Transverse colon (tissue), 4 donors: ENCODE measurements at regions of chr5 and their contacts with region 1.

Region 1: GRCh38 chr5:179166886-179167841 is 107.0 kb downstream of the ZNF354C start:
- DNase-seq: peak; percentile 34
- H3K4me3 ChIP-seq: peak overlapping the region in 2 of 4 donors; percentile 9 to 25
- H3K27ac ChIP-seq: no peak overlapping the region
- H3K4me1 ChIP-seq: peaks cover 0 to 10% (median 4%) of the 10 kb centered on the region in 4 donors
- H3K27me3 ChIP-seq: no peaks in the 10 kb centered on the region
- CTCF ChIP-seq: peak; percentile 47 to 93 (median 88)
- EP300 ChIP-seq: no peak
- POLR2A ChIP-seq: no peak

Region 2: DNA sequence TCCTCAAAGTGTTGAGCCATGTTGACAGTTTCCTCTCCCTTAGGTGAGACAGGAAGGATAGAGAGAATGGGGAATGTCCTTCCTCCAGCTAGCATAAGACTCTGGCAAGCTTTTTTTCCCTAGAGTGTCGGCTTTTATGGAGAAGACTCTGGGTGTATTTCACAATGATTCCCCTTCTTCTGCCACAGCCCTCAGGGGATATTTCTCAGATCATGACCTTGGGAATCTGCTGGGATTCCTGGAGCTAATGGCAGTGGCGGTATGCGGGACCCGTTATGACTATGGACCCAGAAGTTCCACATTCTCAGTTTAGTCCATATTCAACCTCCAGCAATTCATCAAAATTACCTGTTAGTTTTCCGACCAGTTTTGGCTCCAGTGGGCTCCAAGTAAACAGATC is 460.6 kb before region 1 on chr5:
- in situ Hi-C with region 1: no loop called
- intact Hi-C with region 1: no loop called
- DNase-seq: no peak
- H3K4me3 ChIP-seq: no peak overlapping the region
- H3K27ac ChIP-seq: no peak overlapping the region
- H3K4me1 ChIP-seq: no peaks in the 10 kb centered on the region
- H3K27me3 ChIP-seq: no peaks in the 10 kb centered on the region
- CTCF ChIP-seq: no peak
- EP300 ChIP-seq: no peak
- POLR2A ChIP-seq: no peak

Region 3: GRCh38 chr5:178859625-178860531 is 307.3 kb before region 1 on chr5 and contains the start of gene ZNF354B:
- in situ Hi-C with region 1: no loop called
- intact Hi-C with region 1: no loop called
- DNase-seq: peak; percentile 92
- H3K4me3 ChIP-seq: peak within 1 kb of the TSS; percentile 78 to 97 (median 90)
- H3K27ac ChIP-seq: peak within 1 kb of the TSS; percentile 83 to 94 (median 89)
- H3K4me1 ChIP-seq: peaks cover 4 to 13% (median 6%) of the 10 kb centered on the region in 4 donors
- H3K27me3 ChIP-seq: no peaks in the 10 kb centered on the region
- CTCF ChIP-seq: peak in 1 of 5 experiments; percentile 15
- EP300 ChIP-seq: no peak
- POLR2A ChIP-seq: peak; percentile 61
- total RNA-seq, gene ZNF354B: 2.4 to 42.3 (median 14.8) TPM

Region 4: DNA sequence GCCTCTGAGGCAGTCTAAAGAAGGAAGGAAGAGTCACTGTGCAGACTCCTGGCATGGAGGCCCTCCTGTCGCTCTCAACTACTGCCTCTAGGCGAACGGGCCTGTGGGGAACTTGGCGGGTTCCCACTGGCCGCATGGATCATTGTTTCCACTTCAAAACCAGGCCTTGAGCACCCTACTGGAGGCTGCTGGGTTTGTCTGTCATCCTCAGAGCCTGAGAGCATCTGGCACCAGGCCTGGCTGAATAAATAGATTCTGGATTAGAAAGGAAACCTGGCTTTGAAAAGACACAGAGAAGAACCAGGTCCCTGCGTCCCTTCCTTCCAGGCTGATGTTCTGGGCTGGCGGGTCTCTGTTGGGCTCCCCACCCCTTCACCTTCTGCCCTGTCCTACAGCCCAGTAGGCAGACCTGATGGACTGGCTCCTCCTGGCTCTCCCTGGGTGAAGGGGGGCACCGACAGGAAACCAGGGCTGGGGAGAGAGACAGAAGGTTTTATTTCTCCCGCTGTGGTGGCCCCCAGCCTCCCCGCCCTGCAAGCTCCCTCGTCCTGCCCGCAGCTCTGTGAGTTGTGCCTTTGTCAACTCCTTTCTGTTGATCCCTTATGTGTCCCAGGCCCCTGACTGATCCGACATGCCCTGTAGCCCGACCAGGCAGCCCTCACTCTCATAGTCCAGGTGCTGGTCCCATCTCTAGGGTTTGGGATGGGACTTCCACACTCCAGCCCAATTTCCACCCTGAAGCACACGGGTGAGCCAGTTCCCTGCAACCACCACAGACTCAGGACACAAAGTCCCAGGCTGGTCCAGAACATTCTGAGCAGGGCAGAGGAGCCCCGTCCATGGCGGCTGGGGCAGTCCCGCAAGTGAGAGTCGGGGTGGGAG is 128.0 kb after region 1 on chr5:
- in situ Hi-C with region 1: no loop called
- intact Hi-C with region 1: no loop called
- DNase-seq: no peak
- H3K4me3 ChIP-seq: no peak overlapping the region
- H3K27ac ChIP-seq: peak overlapping the region; percentile 12 to 46 (median 34)
- H3K4me1 ChIP-seq: peaks cover 0 to 9% (median 0%) of the 10 kb centered on the region in 4 donors
- H3K27me3 ChIP-seq: no peaks in the 10 kb centered on the region
- CTCF ChIP-seq: no peak
- EP300 ChIP-seq: no peak
- POLR2A ChIP-seq: no peak

Region 5: GRCh38 chr5:179345433-179346321 is 178.5 kb after region 1 on chr5 and contains the start of gene ADAMTS2:
- in situ Hi-C with region 1: loop called in 1 of 4 experiments (anchors 25 kb)
- intact Hi-C with region 1: loop called (anchors 10 kb)
- DNase-seq: peak; percentile 50
- H3K4me3 ChIP-seq: peak within 1 kb of the TSS; percentile 48 to 60 (median 55)
- H3K27ac ChIP-seq: peak within 1 kb of the TSS; percentile 67 to 82 (median 71)
- H3K4me1 ChIP-seq: peaks cover 5 to 23% (median 13%) of the 10 kb centered on the region in 4 donors
- H3K27me3 ChIP-seq: peaks cover 50% of the 10 kb centered on the region
- CTCF ChIP-seq: no peak
- EP300 ChIP-seq: no peak
- POLR2A ChIP-seq: no peak
- total RNA-seq, gene ADAMTS2: 6.0 to 20.9 (median 13.5) TPM

Region 6: DNA sequence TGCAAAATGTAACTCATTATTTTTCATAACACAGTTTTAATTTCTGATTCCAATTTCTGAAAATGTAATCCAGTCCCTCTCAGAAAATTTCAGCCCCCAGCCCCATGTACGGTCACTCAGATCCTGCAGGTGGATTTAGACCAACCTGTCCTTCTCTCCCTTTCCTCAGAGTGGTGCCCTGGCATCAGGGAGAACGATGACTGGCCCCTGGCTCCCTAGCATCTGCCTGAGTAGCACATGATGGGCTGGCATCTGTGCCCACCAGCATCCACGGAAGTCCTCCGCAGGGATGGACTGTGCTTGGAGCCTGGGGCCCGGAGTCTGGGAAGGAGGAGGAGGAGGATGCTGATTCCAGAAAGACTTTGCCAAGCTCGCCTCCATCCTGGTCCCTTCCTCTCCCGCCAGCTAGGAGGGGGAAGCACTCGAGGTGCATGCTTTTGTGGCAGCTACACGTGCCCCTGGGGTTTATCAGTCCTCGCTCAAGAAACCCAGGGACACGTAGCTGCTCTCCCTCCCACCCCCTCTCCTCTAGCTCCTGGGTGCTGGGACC is 328.8 kb after region 1 on chr5:
- in situ Hi-C with region 1: loop called in 3 of 4 experiments (anchors 5 to 10 kb)
- intact Hi-C with region 1: loop called (anchors 2 kb)
- DNase-seq: no peak
- H3K4me3 ChIP-seq: no peak overlapping the region
- H3K27ac ChIP-seq: no peak overlapping the region
- H3K4me1 ChIP-seq: no peaks in the 10 kb centered on the region
- H3K27me3 ChIP-seq: no peaks in the 10 kb centered on the region
- CTCF ChIP-seq: no peak
- EP300 ChIP-seq: no peak
- POLR2A ChIP-seq: no peak